PC-9 (cell line): ENCODE measurements at regions of chr6 and their contacts with region 1.

Region 1: GRCh38 chr6:107847844-107848802 is 24.0 kb upstream of the SCML4 start:
- DNase-seq: peak; percentile 52 to 83
- H3K4me3 ChIP-seq: peak overlapping the region; percentile 51
- H3K27ac ChIP-seq: no peak overlapping the region
- H3K4me1 ChIP-seq: no peaks in the 10 kb centered on the region
- H3K27me3 ChIP-seq: no peaks in the 10 kb centered on the region
- CTCF ChIP-seq: peak; percentile 97

Region 2: DNA sequence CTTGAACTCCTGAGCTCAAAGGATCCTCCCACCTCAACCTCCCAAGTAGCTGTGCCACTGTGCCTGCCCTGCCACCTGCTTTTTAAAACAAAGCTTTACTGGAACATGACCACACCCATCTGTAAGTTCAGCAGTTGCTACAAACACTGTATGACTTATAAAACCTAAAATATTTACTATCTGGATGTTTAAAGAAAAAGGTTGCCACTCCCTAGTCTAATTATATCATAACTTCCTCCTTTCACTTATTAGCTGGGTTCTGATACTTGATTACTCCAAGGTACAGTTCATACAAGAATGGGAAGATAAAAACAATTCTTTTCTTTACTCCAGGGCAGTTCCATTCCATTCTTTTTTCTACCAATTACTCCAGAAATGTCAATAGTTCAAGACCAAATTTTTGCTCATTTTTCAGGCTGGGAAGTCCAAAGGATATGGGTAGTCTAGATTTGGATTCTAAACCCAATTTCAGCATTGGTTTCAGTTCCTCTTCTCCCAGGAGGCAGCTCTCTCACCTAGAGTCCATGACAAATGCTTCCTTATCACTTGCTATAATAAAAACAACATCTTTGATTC is 46.8 kb after region 1 on chr6:
- CTCF ChIA-PET with region 1: no interaction called
- POLR2A ChIA-PET with region 1: interaction called, 24 read pairs
- intact Hi-C with region 1: no loop called
- DNase-seq: peak; percentile 37 to 79
- H3K4me3 ChIP-seq: no peak overlapping the region
- H3K27ac ChIP-seq: peak overlapping the region; percentile 68
- H3K4me1 ChIP-seq: peaks cover 17% of the 10 kb centered on the region
- H3K27me3 ChIP-seq: no peaks in the 10 kb centered on the region
- CTCF ChIP-seq: no peak